ENCODE measurements at regions of chr9 and their contacts with region 1.

Region 1: GRCh38 chr9:3441197-3441816 is 84.5 kb downstream of the RFX3 start:
- DNase-seq: peak; percentile 18 to 40
- H3K4me3 ChIP-seq: no peak overlapping the region
- H3K27ac ChIP-seq: no peak overlapping the region
- H3K4me1 ChIP-seq: no peaks in the 10 kb centered on the region
- H3K27me3 ChIP-seq: no peaks in the 10 kb centered on the region
- CTCF ChIP-seq: peak; percentile 56

Region 2: DNA sequence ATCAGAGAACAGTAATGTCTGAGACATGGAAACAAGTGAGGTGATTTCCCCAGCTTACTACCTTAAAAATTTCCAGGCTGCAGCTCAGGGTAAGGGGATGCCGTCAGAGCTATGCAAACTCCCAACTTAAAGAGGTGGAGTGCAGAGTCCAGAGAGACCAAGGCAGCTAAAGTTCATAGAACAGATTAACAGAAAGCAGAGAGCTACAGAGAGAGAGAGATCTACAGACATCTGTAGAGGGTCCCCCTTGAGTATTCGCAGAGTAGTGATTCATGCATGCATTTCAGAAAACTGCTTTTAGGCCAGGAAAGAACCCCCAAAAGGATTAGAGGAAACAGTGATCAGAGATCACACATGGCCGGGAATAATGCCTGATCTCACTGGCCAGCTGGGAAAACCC is 291.2 kb before region 1 on chr9:
- CTCF ChIA-PET with region 1: no interaction called
- POLR2A ChIA-PET with region 1: no interaction called
- intact Hi-C with region 1: no loop called
- DNase-seq: no peak
- H3K4me3 ChIP-seq: no peak overlapping the region
- H3K27ac ChIP-seq: no peak overlapping the region
- H3K4me1 ChIP-seq: no peaks in the 10 kb centered on the region
- H3K27me3 ChIP-seq: no peaks in the 10 kb centered on the region
- CTCF ChIP-seq: no peak

Region 3: DNA sequence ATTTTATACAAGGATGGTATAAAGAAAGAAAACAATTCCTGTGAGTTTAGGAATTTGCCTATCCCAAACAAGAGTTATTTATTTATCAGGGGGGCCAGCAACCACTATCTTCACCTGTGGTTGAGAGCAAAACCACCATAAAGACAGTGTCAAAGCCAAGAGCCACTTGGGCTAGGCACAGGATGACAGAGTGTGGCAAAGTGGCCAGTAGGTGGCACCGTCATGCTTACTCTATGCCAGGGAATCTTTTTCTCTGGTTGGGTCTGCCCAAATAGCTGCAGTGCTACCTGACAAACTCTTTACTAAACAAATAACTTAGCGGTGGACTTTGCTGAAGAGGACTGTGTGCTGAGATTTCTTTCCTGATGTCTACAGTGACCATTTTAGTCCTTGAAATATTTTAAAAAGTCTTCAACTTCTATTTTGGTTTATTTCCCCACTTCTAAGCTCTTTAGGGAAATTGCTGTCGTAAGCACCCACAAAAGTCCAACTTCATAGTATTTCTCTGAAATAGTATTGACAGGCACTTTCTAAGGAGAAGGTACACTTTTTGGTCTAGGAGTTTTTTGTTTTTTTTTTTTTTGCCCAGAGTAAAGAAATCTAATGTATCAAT is 200.5 kb before region 1 on chr9:
- CTCF ChIA-PET with region 1: interaction called, 4 read pairs
- POLR2A ChIA-PET with region 1: no interaction called
- intact Hi-C with region 1: loop called (anchors 10 kb)
- DNase-seq: peak in 1 of 2 experiments; percentile 38
- H3K4me3 ChIP-seq: no peak overlapping the region
- H3K27ac ChIP-seq: no peak overlapping the region
- H3K4me1 ChIP-seq: no peaks in the 10 kb centered on the region
- H3K27me3 ChIP-seq: no peaks in the 10 kb centered on the region
- CTCF ChIP-seq: peak; percentile 71